ENCODE measurements at regions of chr4 and their contacts with region 1.

Region 1: GRCh38 chr4:105471566-105472176 is 2.2 kb downstream of the PPA2 start:
- DNase-seq: peak; percentile 78
- ATAC-seq: peak; percentile 46
- H3K4me3 ChIP-seq: peak overlapping the region; percentile 94
- H3K27ac ChIP-seq: no peak overlapping the region
- H3K4me1 ChIP-seq: peaks cover 20% of the 10 kb centered on the region
- H3K27me3 ChIP-seq: no peaks in the 10 kb centered on the region
- CTCF ChIP-seq: peak; percentile 73

Region 2: DNA sequence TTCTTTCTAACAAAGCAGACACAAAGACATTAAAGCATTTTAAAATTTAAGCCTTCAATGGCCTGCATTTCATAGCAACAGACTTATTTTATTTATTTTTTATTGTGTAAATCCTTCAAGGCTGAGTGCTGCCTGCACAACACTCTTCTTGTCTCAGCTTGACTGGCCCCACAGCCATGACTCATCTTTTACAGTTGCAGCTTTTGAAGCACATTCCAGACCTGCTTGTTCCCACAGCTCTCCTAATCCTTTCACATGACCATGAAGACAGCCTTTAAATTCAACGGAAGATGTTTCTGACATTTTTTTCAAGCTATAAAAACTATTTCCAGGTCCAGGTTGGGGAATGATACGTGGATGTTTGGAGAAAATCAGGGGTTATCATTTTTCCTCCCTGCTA is 1475.0 kb before region 1 on chr4:
- CTCF ChIA-PET with region 1: no interaction called
- POLR2A ChIA-PET with region 1: no interaction called
- intact Hi-C with region 1: loop called (anchors 2 kb)
- DNase-seq: peak; percentile 72
- ATAC-seq: peak; percentile 99
- H3K4me3 ChIP-seq: no peak overlapping the region
- H3K27ac ChIP-seq: peak overlapping the region; percentile 14; the same call in 1 of the 2 replicates
- H3K4me1 ChIP-seq: peaks cover 12% of the 10 kb centered on the region; the same call in 1 of the 2 replicates
- H3K27me3 ChIP-seq: no peaks in the 10 kb centered on the region
- CTCF ChIP-seq: no peak

Region 3: DNA sequence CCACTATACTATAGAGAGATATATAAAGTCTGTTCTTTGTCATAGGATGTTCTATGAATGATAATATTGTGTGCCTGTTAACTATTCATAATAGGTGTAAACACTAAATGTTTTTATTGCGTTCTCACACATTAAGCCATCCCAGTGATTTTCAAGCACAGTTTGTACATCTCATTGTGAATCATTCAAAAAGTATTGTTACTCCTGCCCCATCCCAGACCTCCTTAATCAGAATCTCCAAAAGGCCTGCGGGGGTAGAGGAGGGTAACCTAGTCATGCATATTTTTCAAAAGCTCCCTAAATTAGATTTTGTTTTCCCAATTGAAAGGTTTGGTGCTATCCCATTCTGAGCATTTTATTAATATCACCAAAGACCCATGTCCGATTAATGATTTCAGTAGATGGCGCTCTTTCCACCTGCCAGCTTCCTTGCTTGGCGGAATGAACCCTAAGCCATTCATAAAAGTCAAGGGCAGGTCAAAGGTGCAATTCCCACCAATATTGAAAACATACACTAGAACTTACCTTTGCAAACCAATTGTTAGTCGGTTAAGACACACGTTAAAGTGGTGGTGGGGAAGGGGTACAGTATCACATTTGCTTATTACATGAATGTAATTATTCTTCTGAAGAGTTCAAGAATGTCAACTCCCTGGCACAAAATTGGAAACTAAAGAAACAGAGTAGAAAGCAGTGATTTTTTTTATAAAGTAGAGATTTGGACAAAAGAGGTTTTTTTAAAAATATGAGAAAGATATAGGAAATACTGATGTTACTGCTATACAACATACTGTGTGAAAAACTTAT is 330.8 kb before region 1 on chr4:
- CTCF ChIA-PET with region 1: no interaction called
- POLR2A ChIA-PET with region 1: no interaction called
- intact Hi-C with region 1: loop called (anchors 2 kb)
- DNase-seq: peak; percentile 47
- ATAC-seq: peak; percentile 31
- H3K4me3 ChIP-seq: no peak overlapping the region
- H3K27ac ChIP-seq: no peak overlapping the region
- H3K4me1 ChIP-seq: peaks cover 10% of the 10 kb centered on the region
- H3K27me3 ChIP-seq: no peaks in the 10 kb centered on the region
- CTCF ChIP-seq: peak; percentile 77

Region 4: DNA sequence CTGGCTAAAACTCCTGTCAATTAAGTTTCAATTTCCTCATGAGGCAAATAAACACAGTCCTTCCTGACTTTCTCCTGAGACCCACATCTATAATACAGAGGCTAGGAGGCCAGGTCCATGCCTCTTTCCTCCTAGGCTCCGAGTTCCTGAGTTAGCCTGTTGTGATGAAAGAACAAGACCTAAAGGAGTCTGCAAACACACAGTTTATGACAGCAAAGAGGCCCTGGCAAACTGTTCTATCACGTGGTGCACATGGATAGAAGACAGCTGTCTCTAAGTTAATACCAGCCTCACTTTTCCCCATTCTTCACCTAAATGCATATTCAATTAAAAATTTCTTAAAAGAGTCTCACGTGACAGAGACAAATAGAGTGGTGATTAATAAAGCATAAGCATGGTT is 179.7 kb before region 1 on chr4:
- CTCF ChIA-PET with region 1: no interaction called
- POLR2A ChIA-PET with region 1: no interaction called
- intact Hi-C with region 1: no loop called
- DNase-seq: no peak
- ATAC-seq: no peak
- H3K4me3 ChIP-seq: no peak overlapping the region
- H3K27ac ChIP-seq: no peak overlapping the region
- H3K4me1 ChIP-seq: no peaks in the 10 kb centered on the region
- H3K27me3 ChIP-seq: no peaks in the 10 kb centered on the region
- CTCF ChIP-seq: no peak